ENCODE measurements at regions of chr2 and their contacts with region 1.

Region 1: DNA sequence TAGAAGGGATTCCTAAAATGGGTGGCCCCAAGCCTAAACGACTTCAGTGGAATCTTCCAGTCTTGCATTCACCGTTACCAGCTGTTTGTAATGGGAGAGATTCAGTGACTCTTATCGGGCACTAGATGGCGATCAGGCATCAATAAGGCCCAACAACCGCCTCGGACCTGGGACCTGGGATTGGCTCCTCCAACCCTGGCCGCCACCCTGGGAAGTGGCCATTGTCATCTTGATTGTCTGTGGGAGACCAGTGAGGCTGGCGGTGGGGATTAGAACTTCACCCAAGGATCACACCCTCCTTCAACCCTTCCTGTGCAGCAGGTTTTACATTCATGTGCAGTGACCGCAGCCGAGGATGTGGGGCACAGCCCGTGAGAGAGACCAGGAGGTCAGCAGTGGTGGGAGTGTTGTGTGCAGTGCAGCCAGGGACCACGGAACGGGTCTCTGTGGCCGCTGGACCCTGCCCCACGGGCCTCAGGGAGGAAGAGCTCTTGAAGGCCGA is 85.3 kb downstream of the SPP2 start:
- DNase-seq: peak; percentile 83 to 91
- H3K4me3 ChIP-seq: peak overlapping the region; percentile 2; the same call in 1 of the 2 replicates
- H3K4me3 Mint-ChIP-seq: peak overlapping the region; percentile 57
- H3K27ac Mint-ChIP-seq: peak overlapping the region; percentile 87
- H3K4me1 ChIP-seq: peaks cover 28% of the 10 kb centered on the region
- H3K4me1 Mint-ChIP-seq: peaks cover 5% of the 10 kb centered on the region
- H3K27me3 ChIP-seq: no peaks in the 10 kb centered on the region
- H3K27me3 Mint-ChIP-seq: no peaks in the 10 kb centered on the region
- CTCF ChIP-seq: peak; percentile 59 to 70

Region 2: GRCh38 chr2:233854241-233854981 is 281.4 kb before region 1 on chr2 and contains the start of gene HJURP:
- CTCF ChIA-PET with region 1: no interaction called
- POLR2A ChIA-PET with region 1: no interaction called
- intact Hi-C with region 1: no loop called
- DNase-seq: peak; percentile 90 to 94
- H3K4me3 ChIP-seq: peak within 1 kb of the TSS; percentile 71
- H3K4me3 Mint-ChIP-seq: peak within 1 kb of the TSS; percentile 91
- H3K27ac Mint-ChIP-seq: peak within 1 kb of the TSS; percentile 91
- H3K4me1 ChIP-seq: no peaks in the 10 kb centered on the region
- H3K4me1 Mint-ChIP-seq: peaks cover 6% of the 10 kb centered on the region
- H3K27me3 ChIP-seq: no peaks in the 10 kb centered on the region
- H3K27me3 Mint-ChIP-seq: no peaks in the 10 kb centered on the region
- CTCF ChIP-seq: no peak
- total RNA-seq, gene HJURP: 29.7 and 35.0 TPM in 2 replicates

Region 3: GRCh38 chr2:233976690-233977294 is 159.0 kb before region 1 on chr2:
- CTCF ChIA-PET with region 1: no interaction called
- POLR2A ChIA-PET with region 1: no interaction called
- intact Hi-C with region 1: loop called (anchors 2 kb)
- DNase-seq: peak in 1 of 2 experiments; percentile 50
- H3K4me3 ChIP-seq: no peak overlapping the region
- H3K4me3 Mint-ChIP-seq: no peak overlapping the region
- H3K27ac Mint-ChIP-seq: no peak overlapping the region
- H3K4me1 ChIP-seq: no peaks in the 10 kb centered on the region
- H3K4me1 Mint-ChIP-seq: peaks cover 11% of the 10 kb centered on the region
- H3K27me3 ChIP-seq: no peaks in the 10 kb centered on the region
- H3K27me3 Mint-ChIP-seq: no peaks in the 10 kb centered on the region
- CTCF ChIP-seq: peak; percentile 34 to 44

Region 4: GRCh38 chr2:234091432-234091879 is 44.3 kb before region 1 on chr2:
- CTCF ChIA-PET with region 1: no interaction called
- POLR2A ChIA-PET with region 1: no interaction called
- intact Hi-C with region 1: no loop called
- DNase-seq: no peak
- H3K4me3 ChIP-seq: no peak overlapping the region
- H3K4me3 Mint-ChIP-seq: no peak overlapping the region
- H3K27ac Mint-ChIP-seq: no peak overlapping the region
- H3K4me1 ChIP-seq: no peaks in the 10 kb centered on the region
- H3K4me1 Mint-ChIP-seq: no peaks in the 10 kb centered on the region
- H3K27me3 ChIP-seq: no peaks in the 10 kb centered on the region
- H3K27me3 Mint-ChIP-seq: peaks cover 9% of the 10 kb centered on the region
- CTCF ChIP-seq: no peak

Region 5: GRCh38 chr2:234191819-234192407 is 56.1 kb after region 1 on chr2:
- CTCF ChIA-PET with region 1: no interaction called
- POLR2A ChIA-PET with region 1: no interaction called
- intact Hi-C with region 1: loop called (anchors 1 kb)
- DNase-seq: no peak
- H3K4me3 ChIP-seq: no peak overlapping the region
- H3K4me3 Mint-ChIP-seq: no peak overlapping the region
- H3K27ac Mint-ChIP-seq: no peak overlapping the region
- H3K4me1 ChIP-seq: peaks cover 22% of the 10 kb centered on the region
- H3K4me1 Mint-ChIP-seq: peaks cover 28% of the 10 kb centered on the region
- H3K27me3 ChIP-seq: no peaks in the 10 kb centered on the region
- H3K27me3 Mint-ChIP-seq: no peaks in the 10 kb centered on the region
- CTCF ChIP-seq: no peak

Region 6: GRCh38 chr2:234288974-234289455 is 153.2 kb after region 1 on chr2:
- CTCF ChIA-PET with region 1: no interaction called
- POLR2A ChIA-PET with region 1: no interaction called
- intact Hi-C with region 1: loop called (anchors 2 kb)
- DNase-seq: peak; percentile 53 to 59
- H3K4me3 ChIP-seq: no peak overlapping the region
- H3K4me3 Mint-ChIP-seq: no peak overlapping the region
- H3K27ac Mint-ChIP-seq: peak overlapping the region; percentile 29
- H3K4me1 ChIP-seq: peaks cover 25% of the 10 kb centered on the region
- H3K4me1 Mint-ChIP-seq: peaks cover 22% of the 10 kb centered on the region
- H3K27me3 ChIP-seq: no peaks in the 10 kb centered on the region
- H3K27me3 Mint-ChIP-seq: no peaks in the 10 kb centered on the region
- CTCF ChIP-seq: peak; percentile 43 to 44

Region 7: GRCh38 chr2:234406085-234406484 is 270.3 kb after region 1 on chr2:
- CTCF ChIA-PET with region 1: no interaction called
- POLR2A ChIA-PET with region 1: interaction called, 3 read pairs
- intact Hi-C with region 1: loop called (anchors 1 kb)
- DNase-seq: peak; percentile 42 to 46
- H3K4me3 ChIP-seq: no peak overlapping the region
- H3K4me3 Mint-ChIP-seq: no peak overlapping the region
- H3K27ac Mint-ChIP-seq: no peak overlapping the region
- H3K4me1 ChIP-seq: peaks cover 30% of the 10 kb centered on the region
- H3K4me1 Mint-ChIP-seq: peaks cover 28% of the 10 kb centered on the region
- H3K27me3 ChIP-seq: no peaks in the 10 kb centered on the region
- H3K27me3 Mint-ChIP-seq: no peaks in the 10 kb centered on the region
- CTCF ChIP-seq: peak in 1 of 2 experiments; percentile 15

Region 8: DNA sequence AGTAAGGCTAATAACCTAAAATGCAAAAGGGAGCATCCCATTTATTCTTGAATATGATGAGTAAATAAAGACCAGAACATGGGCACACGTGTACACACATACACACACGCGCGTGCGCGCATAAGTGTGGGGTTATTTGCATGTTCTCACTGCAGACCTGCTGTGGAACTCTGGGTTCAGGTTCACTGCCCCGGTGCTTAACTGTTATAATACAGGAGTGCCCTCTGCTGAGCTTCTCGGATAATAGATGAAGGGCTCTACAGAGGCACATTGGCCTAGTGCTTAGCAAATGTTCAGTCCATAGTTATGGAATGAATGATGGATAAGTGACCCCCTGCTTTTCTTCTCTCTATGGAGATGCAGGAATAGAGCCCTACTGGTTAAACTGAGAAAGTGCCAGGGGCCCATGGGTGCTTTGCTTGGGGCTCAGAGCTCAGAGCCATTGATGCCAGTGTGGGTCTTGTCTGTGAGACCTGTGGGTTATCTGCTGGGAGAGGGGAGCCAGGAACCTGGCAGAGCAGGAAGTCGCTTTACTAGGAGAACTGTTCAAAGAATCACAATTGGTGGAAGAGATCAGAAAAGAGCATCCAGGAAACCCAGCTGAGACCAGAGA is 364.7 kb after region 1 on chr2:
- CTCF ChIA-PET with region 1: interaction called, 9 read pairs
- POLR2A ChIA-PET with region 1: interaction called, 3 read pairs
- intact Hi-C with region 1: loop called (anchors 1 kb)
- DNase-seq: peak; percentile 56 to 60
- H3K4me3 ChIP-seq: no peak overlapping the region
- H3K4me3 Mint-ChIP-seq: no peak overlapping the region
- H3K27ac Mint-ChIP-seq: no peak overlapping the region
- H3K4me1 ChIP-seq: peaks cover 6% of the 10 kb centered on the region
- H3K4me1 Mint-ChIP-seq: peaks cover 8% of the 10 kb centered on the region
- H3K27me3 ChIP-seq: no peaks in the 10 kb centered on the region
- H3K27me3 Mint-ChIP-seq: no peaks in the 10 kb centered on the region
- CTCF ChIP-seq: peak; percentile 34 to 46

Measured in Caco-2 (cell line).